PC-3 (cell line): ENCODE measurements at regions of chr17 and their contacts with region 1.

Region 1: DNA sequence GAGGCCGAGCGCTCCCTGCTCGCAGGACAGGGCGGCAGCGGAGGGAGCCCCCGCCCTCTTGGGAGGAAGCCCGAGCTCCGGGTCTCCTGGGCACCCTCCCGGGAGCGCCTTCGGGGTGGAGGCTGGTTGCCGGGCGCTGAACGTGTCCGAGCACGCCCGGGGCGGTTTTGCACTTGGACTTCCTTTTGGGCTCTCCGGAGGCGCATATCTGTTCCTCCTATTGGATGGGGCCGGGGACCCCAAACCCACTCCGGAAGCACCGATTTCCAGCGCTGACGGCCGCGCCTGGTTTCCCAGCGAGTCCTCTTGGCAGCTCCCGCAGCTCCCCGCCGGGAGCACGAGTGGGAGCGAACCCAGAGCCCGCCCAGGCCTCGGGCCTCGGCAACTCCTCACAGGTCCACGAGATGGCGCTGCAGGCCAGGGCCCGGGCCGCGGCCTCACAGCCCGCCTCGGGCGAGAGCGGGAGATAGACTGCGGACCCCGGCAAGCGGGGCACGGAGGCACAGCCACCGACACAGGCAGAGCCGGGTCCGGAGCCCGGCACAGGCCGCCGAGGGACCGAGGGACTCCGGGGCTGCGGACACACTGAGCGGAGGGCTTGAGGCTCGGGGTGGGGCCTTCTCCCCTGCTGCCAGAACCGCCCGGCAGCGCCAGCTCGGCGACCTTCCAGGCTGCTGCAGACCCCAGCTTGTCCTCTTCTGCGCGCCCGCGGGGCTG is 12.7 kb downstream of the TBX2 start:
- DNase-seq: peak; percentile 89
- ATAC-seq: peak; percentile 45
- H3K4me3 ChIP-seq: peak overlapping the region; percentile 84
- H3K27ac ChIP-seq: peak overlapping the region; percentile 81
- H3K4me1 ChIP-seq: peaks cover 31% of the 10 kb centered on the region
- H3K27me3 ChIP-seq: no peaks in the 10 kb centered on the region
- CTCF ChIP-seq: peak; percentile 98

Region 2: GRCh38 chr17:60901806-60902205 is 510.5 kb before region 1 on chr17:
- CTCF ChIA-PET with region 1: interaction called, 3 read pairs
- POLR2A ChIA-PET with region 1: no interaction called
- intact Hi-C with region 1: loop called (anchors 5 kb)
- DNase-seq: peak; percentile 97
- ATAC-seq: peak; percentile 94
- H3K4me3 ChIP-seq: peak overlapping the region; percentile 34; the same call in 1 of the 2 replicates
- H3K27ac ChIP-seq: peak overlapping the region; percentile 66
- H3K4me1 ChIP-seq: peaks cover 27% of the 10 kb centered on the region
- H3K27me3 ChIP-seq: no peaks in the 10 kb centered on the region
- CTCF ChIP-seq: no peak

Region 3: DNA sequence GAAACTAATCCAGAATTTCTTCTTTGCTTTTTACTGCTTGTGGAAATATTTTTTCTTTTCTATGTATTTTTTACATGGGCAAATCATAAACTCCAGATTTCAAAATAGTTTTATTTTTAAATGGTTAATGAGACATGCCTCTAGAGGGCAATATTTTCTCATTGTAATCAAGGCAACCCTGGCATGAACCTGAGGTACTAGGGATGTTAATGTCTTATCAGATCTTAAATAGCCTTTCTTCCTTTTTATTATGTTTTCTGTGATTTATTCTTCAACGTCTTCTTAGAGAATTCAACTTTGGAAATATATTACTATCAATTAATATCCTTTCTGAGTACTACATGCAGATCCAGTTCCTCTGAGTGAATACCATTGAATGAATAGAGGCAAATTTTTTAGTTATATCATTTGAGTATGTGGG is 410.0 kb before region 1 on chr17:
- CTCF ChIA-PET with region 1: no interaction called
- POLR2A ChIA-PET with region 1: no interaction called
- intact Hi-C with region 1: loop called (anchors 1 kb)
- DNase-seq: peak; percentile 81
- ATAC-seq: peak; percentile 42; the same call in 1 of the 2 replicates
- H3K4me3 ChIP-seq: no peak overlapping the region
- H3K27ac ChIP-seq: no peak overlapping the region
- H3K4me1 ChIP-seq: no peaks in the 10 kb centered on the region
- H3K27me3 ChIP-seq: no peaks in the 10 kb centered on the region
- CTCF ChIP-seq: peak; percentile 87

Region 4: DNA sequence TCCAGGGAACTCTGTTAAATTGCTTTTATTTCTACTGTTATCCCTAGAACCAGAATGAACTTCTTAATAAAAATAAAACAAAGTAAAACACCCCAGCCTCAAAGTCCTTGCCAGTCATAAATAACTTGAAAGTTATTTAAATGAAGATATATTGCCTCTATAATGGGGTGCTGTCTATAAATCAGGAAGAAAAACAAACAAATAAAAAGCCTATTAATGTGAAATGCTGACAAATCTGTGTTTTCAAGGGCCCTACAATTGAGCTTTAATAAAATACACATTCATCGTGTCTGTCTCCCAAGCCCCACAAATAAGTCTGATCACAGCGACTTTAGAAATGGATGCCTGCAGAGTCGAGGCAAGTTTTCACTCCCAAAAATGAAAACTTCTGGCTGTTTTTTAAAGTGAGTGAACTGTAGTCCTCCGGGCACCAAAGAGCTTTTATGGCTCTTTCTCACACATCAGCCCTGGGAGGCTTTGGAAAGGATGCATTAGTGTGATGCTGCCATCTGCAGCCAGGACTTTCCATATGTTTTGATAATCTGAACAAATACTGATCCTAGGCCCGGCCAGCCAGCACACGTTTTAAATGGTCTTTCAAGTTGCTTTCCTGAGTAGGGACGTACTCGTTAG is 162.4 kb after region 1 on chr17:
- CTCF ChIA-PET with region 1: interaction called, 47 read pairs
- POLR2A ChIA-PET with region 1: interaction called, 3 read pairs
- intact Hi-C with region 1: loop called (anchors 1 kb)
- DNase-seq: peak; percentile 89
- ATAC-seq: peak; percentile 97
- H3K4me3 ChIP-seq: peak overlapping the region; percentile 23; the same call in 1 of the 2 replicates
- H3K27ac ChIP-seq: peak overlapping the region; percentile 59
- H3K4me1 ChIP-seq: peaks cover 26% of the 10 kb centered on the region
- H3K27me3 ChIP-seq: no peaks in the 10 kb centered on the region
- CTCF ChIP-seq: peak; percentile 80

Region 5: GRCh38 chr17:61635913-61636432 is 223.7 kb after region 1 on chr17:
- CTCF ChIA-PET with region 1: no interaction called
- POLR2A ChIA-PET with region 1: no interaction called
- intact Hi-C with region 1: loop called (anchors 1 kb)
- DNase-seq: peak; percentile 86
- ATAC-seq: peak; percentile 73
- H3K4me3 ChIP-seq: no peak overlapping the region
- H3K27ac ChIP-seq: no peak overlapping the region
- H3K4me1 ChIP-seq: no peaks in the 10 kb centered on the region
- H3K27me3 ChIP-seq: no peaks in the 10 kb centered on the region
- CTCF ChIP-seq: peak; percentile 97

Region 6: DNA sequence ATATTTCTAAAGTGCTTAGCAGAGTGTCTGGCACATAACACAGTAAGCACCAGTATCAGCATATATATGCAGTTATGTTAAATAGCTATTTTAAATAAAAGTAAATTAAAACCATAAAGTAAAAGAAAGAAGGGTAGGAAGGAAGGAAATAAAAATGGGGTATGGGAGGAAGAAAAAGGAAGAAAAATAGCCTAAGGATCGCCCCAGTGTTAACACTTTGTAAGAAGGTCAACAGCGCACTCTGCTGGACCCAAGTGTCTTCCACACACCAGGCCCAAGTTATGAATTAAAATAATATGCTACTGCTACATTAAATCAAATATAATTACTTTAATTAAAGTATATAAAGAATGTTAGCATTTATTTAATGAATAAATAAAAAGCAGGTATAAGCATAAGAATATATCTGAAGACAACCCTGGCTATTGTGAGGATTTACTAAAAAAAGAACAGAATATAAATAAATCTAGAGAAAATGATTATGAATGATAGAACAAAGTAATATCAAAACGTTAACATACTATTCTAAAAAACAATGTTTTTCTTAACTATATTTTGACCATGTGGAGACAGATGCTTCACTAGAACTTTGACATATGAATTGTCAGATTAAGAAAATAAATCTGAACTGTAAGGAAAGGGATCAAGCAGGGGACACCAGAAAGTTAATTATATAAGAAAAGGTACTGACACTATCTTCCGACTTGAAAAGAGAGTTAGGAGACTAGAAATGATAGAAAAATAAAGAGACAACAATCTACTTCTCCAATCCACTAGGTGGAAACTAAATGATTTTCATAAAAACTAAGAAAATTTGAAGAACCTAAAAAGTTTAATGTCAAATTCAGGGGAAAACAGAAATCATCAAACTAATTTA is 425.1 kb after region 1 on chr17:
- CTCF ChIA-PET with region 1: interaction called, 32 read pairs
- POLR2A ChIA-PET with region 1: no interaction called
- intact Hi-C with region 1: loop called (anchors 1 kb)
- DNase-seq: peak; percentile 85
- ATAC-seq: peak; percentile 63
- H3K4me3 ChIP-seq: no peak overlapping the region
- H3K27ac ChIP-seq: no peak overlapping the region
- H3K4me1 ChIP-seq: peaks cover 30% of the 10 kb centered on the region
- H3K27me3 ChIP-seq: no peaks in the 10 kb centered on the region
- CTCF ChIP-seq: peak; percentile 82